ENCODE measurements at regions of chr2 and their contacts with region 1.

Region 1: DNA sequence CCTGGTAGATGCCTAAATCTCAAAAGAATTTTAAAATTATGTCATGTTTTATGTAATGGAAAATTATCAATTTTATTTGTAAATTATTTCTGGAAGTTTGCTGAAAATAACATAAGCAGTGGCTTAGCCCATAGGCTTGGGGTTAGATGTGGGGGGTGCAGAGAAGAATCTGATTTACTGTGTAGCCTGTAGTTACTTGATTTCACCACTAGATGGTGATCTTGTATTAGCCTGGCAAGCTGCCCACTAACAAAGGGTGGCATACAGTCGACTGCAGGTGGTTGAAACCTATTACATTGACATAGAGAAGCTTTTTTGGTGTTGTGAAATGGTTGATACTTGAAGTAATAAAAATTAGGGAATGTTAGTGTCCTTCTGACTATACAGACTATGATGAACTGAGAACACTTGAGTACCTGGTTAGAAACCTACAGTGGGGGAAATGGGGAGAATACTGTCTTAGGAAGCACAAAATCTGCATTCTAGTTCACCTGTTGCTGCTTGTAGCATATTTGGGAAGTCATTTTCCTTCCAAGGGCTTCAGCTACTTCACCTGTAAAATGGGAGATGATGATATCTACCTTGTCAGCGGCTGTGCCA is 191.0 kb upstream of the LHCGR start:
- DNase-seq: peak; percentile 62
- ATAC-seq: peak; percentile 97
- H3K4me3 ChIP-seq: no peak overlapping the region
- H3K27ac ChIP-seq: no peak overlapping the region
- H3K4me1 ChIP-seq: no peaks in the 10 kb centered on the region
- H3K27me3 ChIP-seq: peaks cover 0 to 5% of the 10 kb centered on the region in 2 experiments; a peak in 1 of 5 replicates
- CTCF ChIP-seq: peak; percentile 93
- EP300 ChIP-seq: no peak
- POLR2A ChIP-seq: no peak
- RAD21 ChIP-seq: peak; percentile 87

Region 2: GRCh38 chr2:49288902-49289700 is 342.6 kb after region 1 on chr2:
- CTCF ChIA-PET with region 1: no interaction called
- POLR2A ChIA-PET with region 1: no interaction called
- in situ Hi-C with region 1: no loop called
- intact Hi-C with region 1: loop called (anchors 5 kb)
- DNase-seq: no peak
- ATAC-seq: no peak
- H3K4me3 ChIP-seq: no peak overlapping the region
- H3K27ac ChIP-seq: no peak overlapping the region
- H3K4me1 ChIP-seq: no peaks in the 10 kb centered on the region
- H3K27me3 ChIP-seq: no peaks in the 10 kb centered on the region
- CTCF ChIP-seq: no peak
- EP300 ChIP-seq: no peak
- POLR2A ChIP-seq: no peak
- RAD21 ChIP-seq: no peak

Region 3: GRCh38 chr2:49490710-49491109 is 544.2 kb after region 1 on chr2:
- CTCF ChIA-PET with region 1: interaction called, 20 read pairs
- POLR2A ChIA-PET with region 1: no interaction called
- in situ Hi-C with region 1: no loop called
- intact Hi-C with region 1: loop called (anchors 1 kb)
- DNase-seq: peak; percentile 29
- ATAC-seq: peak; percentile 99
- H3K4me3 ChIP-seq: no peak overlapping the region
- H3K27ac ChIP-seq: no peak overlapping the region
- H3K4me1 ChIP-seq: no peaks in the 10 kb centered on the region
- H3K27me3 ChIP-seq: no peaks in the 10 kb centered on the region
- CTCF ChIP-seq: peak; percentile 72
- EP300 ChIP-seq: no peak
- POLR2A ChIP-seq: no peak
- RAD21 ChIP-seq: peak; percentile 39; the same call in 1 of the 2 replicates

Region 4: DNA sequence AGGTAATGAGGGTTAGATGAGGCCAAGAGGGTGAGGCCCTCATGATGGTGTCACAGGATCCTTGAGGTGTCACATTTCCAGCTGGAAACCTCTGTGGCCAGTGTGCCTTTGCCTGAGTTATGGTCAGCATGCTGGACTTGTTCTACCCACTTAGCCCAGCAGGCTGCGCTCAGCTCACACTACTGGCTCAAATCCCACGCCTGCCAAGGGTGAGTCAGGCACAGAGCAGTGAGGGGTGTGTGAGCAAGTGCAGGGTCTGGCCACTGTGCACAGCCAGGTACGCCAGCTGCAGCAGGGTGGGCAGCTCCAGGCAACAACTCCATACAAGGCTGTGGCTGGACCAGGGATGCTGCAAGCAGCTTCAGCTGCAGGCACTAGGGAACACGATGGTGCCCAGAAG is 824.4 kb after region 1 on chr2:
- CTCF ChIA-PET with region 1: no interaction called
- POLR2A ChIA-PET with region 1: no interaction called
- in situ Hi-C with region 1: no loop called
- intact Hi-C with region 1: loop called (anchors 5 kb)
- DNase-seq: peak; percentile 53
- ATAC-seq: peak; percentile 100
- H3K4me3 ChIP-seq: no peak overlapping the region
- H3K27ac ChIP-seq: no peak overlapping the region
- H3K4me1 ChIP-seq: no peaks in the 10 kb centered on the region
- H3K27me3 ChIP-seq: no peaks in the 10 kb centered on the region
- CTCF ChIP-seq: peak; percentile 94
- EP300 ChIP-seq: no peak
- POLR2A ChIP-seq: no peak
- RAD21 ChIP-seq: peak; percentile 86

Region 5: DNA sequence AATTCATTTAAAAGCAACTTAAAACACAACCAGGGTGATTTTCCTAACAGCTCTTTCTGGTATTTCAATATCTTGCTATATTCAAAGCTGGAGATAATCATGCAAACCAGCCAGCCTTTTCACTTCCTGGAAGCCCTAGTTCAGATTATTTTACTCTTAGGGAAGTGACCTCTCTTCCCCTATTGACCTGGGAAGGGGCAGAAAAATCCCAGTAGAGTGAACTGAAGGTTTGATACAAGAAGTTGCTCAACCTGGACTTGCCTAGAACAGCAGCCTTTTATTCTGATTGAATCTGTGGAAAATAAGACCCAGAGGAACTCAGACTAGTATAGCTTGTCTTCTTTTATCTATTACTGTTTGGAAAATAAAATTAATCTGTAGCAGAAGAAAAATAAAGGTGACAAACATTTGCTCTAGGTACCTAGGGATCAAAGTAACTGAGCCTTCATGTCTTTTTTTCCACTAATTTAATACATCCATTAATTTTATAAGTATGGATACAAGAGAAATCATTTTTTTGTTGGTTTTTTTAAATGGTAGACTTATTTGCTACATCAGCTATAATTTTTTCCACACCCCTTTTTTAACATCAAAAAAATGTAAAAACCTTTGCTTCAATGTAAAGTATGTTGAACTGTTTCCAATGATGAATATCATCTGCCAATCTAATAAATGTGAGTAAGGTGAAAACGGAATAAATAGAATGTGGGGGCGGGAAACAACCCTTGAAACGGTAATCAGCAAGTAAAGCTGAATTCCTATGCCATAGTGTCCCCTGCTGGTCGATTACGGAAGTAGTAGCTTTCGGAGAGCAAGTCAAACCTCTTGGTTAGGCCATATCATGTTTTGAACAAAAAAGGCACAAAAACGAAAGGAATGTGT is 1455.5 kb after region 1 on chr2:
- CTCF ChIA-PET with region 1: interaction called, 19 read pairs
- POLR2A ChIA-PET with region 1: no interaction called
- in situ Hi-C with region 1: loop called (anchors 5 kb)
- intact Hi-C with region 1: no loop called
- DNase-seq: peak; percentile 46
- ATAC-seq: peak; percentile 75
- H3K4me3 ChIP-seq: no peak overlapping the region
- H3K27ac ChIP-seq: no peak overlapping the region
- H3K4me1 ChIP-seq: no peaks in the 10 kb centered on the region
- H3K27me3 ChIP-seq: no peaks in the 10 kb centered on the region
- CTCF ChIP-seq: peak; percentile 90
- EP300 ChIP-seq: no peak
- POLR2A ChIP-seq: no peak
- RAD21 ChIP-seq: peak; percentile 64; the same call in 1 of the 2 replicates